WTC11 (cell line): ENCODE measurements at regions of chr1 and their contacts with region 1.

Region 1: GRCh38 chr1:197519741-197520334 is 251.8 kb downstream of the CRB1 start:
- DNase-seq: no peak
- ATAC-seq: peak; percentile 67
- H3K4me3 Mint-ChIP-seq: no peak overlapping the region
- H3K27ac Mint-ChIP-seq: no peak overlapping the region
- H3K4me1 Mint-ChIP-seq: peaks cover 26% of the 10 kb centered on the region
- H3K27me3 Mint-ChIP-seq: no peaks in the 10 kb centered on the region
- CTCF ChIP-seq: no peak

Region 2: GRCh38 chr1:197399755-197400527 is 119.9 kb before region 1 on chr1:
- CTCF ChIA-PET with region 1: interaction called, 19 read pairs
- POLR2A ChIA-PET with region 1: interaction called, 3 read pairs
- DNase-seq: peak; percentile 10
- ATAC-seq: peak; percentile 91
- H3K4me3 Mint-ChIP-seq: no peak overlapping the region
- H3K27ac Mint-ChIP-seq: no peak overlapping the region
- H3K4me1 Mint-ChIP-seq: peaks cover 8% of the 10 kb centered on the region
- H3K27me3 Mint-ChIP-seq: no peaks in the 10 kb centered on the region
- CTCF ChIP-seq: peak; percentile 38; the same call in 1 of the 2 replicates

Region 3: DNA sequence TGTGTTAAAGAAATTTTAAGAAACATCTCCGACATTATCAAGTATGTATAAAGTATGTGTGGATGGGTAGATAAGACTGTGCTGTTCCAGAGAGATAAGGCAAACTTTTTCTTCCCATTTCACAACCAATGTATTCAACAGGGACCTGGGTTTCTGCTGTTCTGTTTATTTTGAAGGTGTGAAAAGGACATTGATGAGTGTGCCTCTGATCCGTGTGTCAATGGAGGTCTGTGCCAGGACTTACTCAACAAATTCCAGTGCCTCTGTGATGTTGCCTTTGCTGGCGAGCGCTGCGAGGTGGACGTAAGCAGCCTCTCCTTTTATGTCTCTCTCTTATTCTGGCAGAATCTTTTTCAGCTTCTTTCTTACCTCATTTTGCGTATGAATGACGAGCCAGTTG is 77.8 kb before region 1 on chr1:
- CTCF ChIA-PET with region 1: no interaction called
- POLR2A ChIA-PET with region 1: no interaction called
- DNase-seq: no peak
- ATAC-seq: peak; percentile 62
- H3K4me3 Mint-ChIP-seq: peak overlapping the region; percentile 40
- H3K27ac Mint-ChIP-seq: peak overlapping the region; percentile 88
- H3K4me1 Mint-ChIP-seq: peaks cover 57% of the 10 kb centered on the region
- H3K27me3 Mint-ChIP-seq: no peaks in the 10 kb centered on the region
- CTCF ChIP-seq: no peak

Region 4: GRCh38 chr1:197557309-197557708 is 37.5 kb after region 1 on chr1:
- CTCF ChIA-PET with region 1: no interaction called
- POLR2A ChIA-PET with region 1: no interaction called
- DNase-seq: no peak
- ATAC-seq: no peak
- H3K4me3 Mint-ChIP-seq: no peak overlapping the region
- H3K27ac Mint-ChIP-seq: no peak overlapping the region
- H3K4me1 Mint-ChIP-seq: no peaks in the 10 kb centered on the region
- H3K27me3 Mint-ChIP-seq: no peaks in the 10 kb centered on the region
- CTCF ChIP-seq: no peak

Region 5: DNA sequence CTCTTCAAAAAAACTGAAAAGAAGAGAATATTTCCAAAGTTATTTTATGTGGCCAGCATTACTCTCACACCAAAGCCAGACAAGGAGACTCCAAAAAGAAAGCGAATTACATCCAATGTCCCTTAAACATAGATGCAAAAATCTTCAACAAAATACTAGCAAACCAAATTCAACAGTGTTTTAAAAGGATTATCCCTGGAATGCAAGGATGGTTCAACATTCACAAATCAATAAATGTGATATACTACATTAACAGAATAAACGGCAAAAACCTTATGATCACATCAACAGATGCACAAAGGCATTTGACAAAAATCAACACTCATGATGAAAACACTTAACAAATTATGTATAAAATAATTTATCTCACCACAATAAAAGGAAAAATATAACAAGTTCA is 47.6 kb after region 1 on chr1:
- CTCF ChIA-PET with region 1: no interaction called
- POLR2A ChIA-PET with region 1: no interaction called
- DNase-seq: no peak
- ATAC-seq: no peak
- H3K4me3 Mint-ChIP-seq: no peak overlapping the region
- H3K27ac Mint-ChIP-seq: no peak overlapping the region
- H3K4me1 Mint-ChIP-seq: no peaks in the 10 kb centered on the region
- H3K27me3 Mint-ChIP-seq: no peaks in the 10 kb centered on the region
- CTCF ChIP-seq: no peak

Region 6: GRCh38 chr1:197928849-197929336 is 409.1 kb after region 1 on chr1:
- CTCF ChIA-PET with region 1: interaction called, 11 read pairs
- POLR2A ChIA-PET with region 1: no interaction called
- DNase-seq: no peak
- ATAC-seq: peak; percentile 71
- H3K4me3 Mint-ChIP-seq: peak overlapping the region; percentile 65
- H3K27ac Mint-ChIP-seq: no peak overlapping the region
- H3K4me1 Mint-ChIP-seq: peaks cover 6% of the 10 kb centered on the region
- H3K27me3 Mint-ChIP-seq: peaks cover 46% of the 10 kb centered on the region
- CTCF ChIP-seq: no peak